Ovary (tissue), 10 donors: ENCODE measurements at regions of chr20 and their contacts with region 1.

Region 1: DNA sequence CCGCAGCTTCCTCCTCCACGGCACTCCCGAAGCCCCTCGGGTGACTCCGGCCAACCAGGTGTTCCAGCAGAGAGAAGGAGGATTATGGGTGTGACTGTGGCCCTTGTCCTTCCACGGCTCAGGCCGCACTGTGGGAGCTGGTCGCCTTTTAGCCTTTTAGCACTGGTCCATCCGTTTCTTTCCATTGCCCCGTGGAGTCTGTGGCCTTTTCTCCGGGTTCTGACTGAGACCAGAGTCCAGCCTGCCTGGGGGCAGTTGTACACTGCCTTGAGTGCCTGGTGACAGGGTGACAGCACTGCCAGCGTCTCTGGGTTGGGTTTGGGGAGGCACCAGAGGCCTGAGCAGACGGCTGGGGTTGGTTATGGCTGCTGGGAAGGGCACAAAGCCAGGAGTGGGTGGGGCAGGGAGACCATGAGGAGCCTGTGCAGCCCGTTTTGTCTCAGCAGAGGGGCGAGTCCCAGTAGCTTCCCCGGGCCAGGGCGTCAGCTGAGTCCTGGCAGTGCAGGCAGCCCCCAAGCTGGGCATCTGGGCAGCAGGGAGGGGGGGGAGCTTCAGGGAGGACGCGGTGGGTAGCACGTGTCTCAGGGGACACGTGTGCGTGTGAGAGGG is 15.2 kb upstream of the SULF2 start:
- DNase-seq: peak in 3 of 5 donors; percentile 34 to 61 (median 50)
- H3K4me3 ChIP-seq: no peak overlapping the region
- H3K27ac ChIP-seq: no peak overlapping the region
- H3K4me1 ChIP-seq: no peaks in the 10 kb centered on the region
- H3K27me3 ChIP-seq: no peaks in the 10 kb centered on the region
- CTCF ChIP-seq: no peak
- EP300 ChIP-seq: no peak
- POLR2A ChIP-seq: no peak

Region 2: GRCh38 chr20:48614575-48615279 is 814.2 kb after region 1 on chr20:
- intact Hi-C with region 1: loop called in 1 of 4 experiments (anchors 5 kb)
- DNase-seq: peak in 1 of 5 donors; percentile 3
- H3K4me3 ChIP-seq: no peak overlapping the region
- H3K27ac ChIP-seq: no peak overlapping the region
- H3K4me1 ChIP-seq: peaks cover under 1% of the 10 kb centered on the region
- H3K27me3 ChIP-seq: no peaks in the 10 kb centered on the region
- CTCF ChIP-seq: no peak
- EP300 ChIP-seq: no peak
- POLR2A ChIP-seq: no peak